Ascending aorta (tissue), 2 donors: ENCODE measurements at regions of chrX and their contacts with region 1.

Region 1: DNA sequence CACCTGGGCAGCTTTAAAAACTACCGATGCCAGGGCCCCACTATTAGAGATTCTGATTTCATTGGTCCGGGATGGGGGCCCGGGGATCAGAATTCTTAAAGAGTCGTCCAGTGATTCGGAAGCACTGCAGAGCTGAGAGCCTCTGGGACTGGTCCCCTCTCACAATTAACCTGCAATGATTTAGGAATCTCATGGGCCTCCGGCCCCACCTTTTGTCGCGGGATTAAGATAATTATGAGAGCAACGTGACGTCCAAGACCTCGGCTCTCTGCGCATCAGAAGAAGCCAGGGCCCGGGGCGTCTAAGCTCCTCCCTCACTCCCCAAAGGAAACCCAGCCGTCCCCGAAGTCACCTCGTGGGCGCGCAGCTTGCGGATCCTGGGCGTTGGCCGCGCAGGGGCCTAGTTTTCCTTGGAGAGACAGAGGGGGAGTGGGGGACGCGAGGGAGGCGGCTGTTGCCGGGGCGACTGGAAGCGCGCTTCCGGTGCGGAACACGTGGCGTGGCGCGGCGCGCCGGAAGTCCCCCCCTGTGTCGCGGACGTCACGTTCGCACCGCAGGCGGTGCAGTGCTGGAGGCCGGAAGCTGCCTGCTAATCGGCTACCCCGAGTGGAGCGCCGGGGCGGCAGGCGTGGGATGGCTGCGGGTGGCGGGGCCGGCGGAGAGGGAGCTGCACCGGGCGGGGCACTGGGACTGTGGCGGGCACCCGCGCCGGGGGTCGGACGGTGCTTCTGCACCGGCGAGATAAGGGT is at the start of gene GEMIN8:
- DNase-seq: peak; percentile 38 to 94
- H3K4me3 ChIP-seq: peak within 1 kb of the TSS; percentile 84 to 88
- H3K27ac ChIP-seq: peak within 1 kb of the TSS; percentile 73 to 88
- H3K4me1 ChIP-seq: peaks cover 0 to 16% of the 10 kb centered on the region in 2 donors
- H3K27me3 ChIP-seq: no peaks in the 10 kb centered on the region
- CTCF ChIP-seq: no peak
- total RNA-seq, gene GEMIN8: 1.5 TPM

Region 2: DNA sequence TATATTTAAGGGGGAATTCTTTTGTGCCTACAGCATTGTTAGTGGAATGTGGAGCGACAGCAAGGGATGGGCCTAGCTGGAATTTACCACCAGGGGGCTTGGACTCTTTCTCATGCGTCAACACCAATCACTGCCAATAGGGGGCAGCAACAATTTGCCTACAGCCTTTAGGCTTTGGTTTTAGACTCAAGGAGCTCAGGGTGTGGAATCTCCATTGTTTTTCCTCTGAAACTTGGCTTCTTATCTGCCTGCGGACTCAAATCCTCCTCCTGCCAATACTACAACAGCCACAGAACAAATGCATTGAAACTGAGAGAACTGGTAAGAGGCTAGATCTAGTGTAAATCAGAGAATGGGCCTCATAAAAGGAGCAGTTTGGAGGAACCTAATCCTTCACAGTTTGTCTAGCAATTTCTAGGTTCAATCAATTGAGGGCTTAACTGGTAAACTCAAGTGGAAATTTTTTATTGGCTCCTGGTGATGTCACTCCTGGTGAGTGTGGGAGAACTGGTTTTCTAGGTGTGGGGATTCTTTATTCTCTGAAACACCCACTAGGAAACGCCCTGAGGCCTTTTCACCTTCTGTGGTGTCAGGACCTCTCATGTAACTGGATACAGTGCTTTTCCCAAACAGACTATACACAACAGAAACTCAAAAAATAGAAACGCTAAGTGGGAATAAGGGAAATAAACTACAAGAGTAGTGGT is 1082.6 kb before region 1 on chrX:
- intact Hi-C with region 1: loop called (anchors 10 kb)
- DNase-seq: peak in 1 of 2 donors; percentile 86
- H3K4me3 ChIP-seq: no peak overlapping the region
- H3K27ac ChIP-seq: peak overlapping the region; percentile 6 to 52
- H3K4me1 ChIP-seq: peaks cover 0 to 6% of the 10 kb centered on the region in 2 donors
- H3K27me3 ChIP-seq: no peaks in the 10 kb centered on the region
- CTCF ChIP-seq: peak; percentile 72 to 89 (median 78)

Region 3: DNA sequence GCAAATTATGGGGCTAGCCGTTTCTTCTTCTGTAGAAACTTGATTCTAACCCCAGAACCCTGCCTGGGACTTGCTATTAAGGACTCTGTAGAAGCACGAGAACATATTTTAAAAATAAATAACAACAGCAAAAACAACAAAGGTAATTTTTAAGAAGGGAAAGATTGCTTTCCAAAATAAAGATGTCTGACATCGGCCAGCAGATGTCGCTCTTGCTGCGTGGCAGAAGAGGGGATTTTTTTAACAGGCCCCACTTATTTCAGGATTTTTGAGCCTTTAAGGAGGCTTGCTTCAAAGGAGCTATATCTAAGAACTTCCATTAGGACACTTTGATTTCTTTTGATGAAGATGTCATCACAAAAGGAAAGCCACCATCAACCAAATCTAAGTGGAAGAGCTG is 523.0 kb before region 1 on chrX:
- intact Hi-C with region 1: loop called (anchors 2 kb)
- DNase-seq: no peak
- H3K4me3 ChIP-seq: no peak overlapping the region
- H3K27ac ChIP-seq: no peak overlapping the region
- H3K4me1 ChIP-seq: no peaks in the 10 kb centered on the region
- H3K27me3 ChIP-seq: no peaks in the 10 kb centered on the region
- CTCF ChIP-seq: peak; percentile 58 to 84 (median 82)

Region 4: DNA sequence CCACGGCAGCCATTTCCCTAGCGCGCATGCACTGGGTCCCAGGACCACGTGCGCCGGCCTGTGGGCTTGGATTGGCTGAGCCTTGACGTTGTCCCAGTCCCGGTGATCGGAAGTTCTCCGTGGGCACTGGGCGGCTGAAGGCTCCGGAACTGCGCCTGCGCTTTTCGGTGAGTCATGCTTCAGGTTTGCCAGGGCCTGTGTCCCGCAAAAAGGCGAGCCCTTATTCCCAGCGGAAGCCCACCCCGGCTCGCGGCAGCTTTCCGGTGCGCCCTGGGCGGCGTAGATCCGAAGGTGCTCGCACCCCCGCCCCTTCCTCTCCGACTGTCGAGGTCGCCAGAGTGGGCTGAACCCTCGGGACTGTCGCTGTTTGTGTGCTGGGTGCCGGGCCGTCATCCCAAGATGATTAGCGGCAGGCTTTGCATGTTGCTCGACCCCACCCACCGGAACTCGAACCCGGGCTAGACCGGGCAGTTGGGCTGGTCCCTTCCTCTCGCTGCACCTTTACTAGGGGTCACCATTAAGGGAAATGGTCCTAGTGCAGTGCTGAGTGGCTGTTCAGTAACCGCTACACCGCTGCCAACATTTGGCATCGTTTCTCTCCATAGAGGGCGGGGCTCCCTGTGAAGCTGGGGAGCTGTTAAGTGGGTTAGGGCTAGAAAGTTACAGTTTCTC is 376.4 kb before region 1 on chrX and contains the start of gene TCEANC:
- intact Hi-C with region 1: loop called (anchors 2 kb)
- DNase-seq: peak; percentile 93 to 99
- H3K4me3 ChIP-seq: peak within 1 kb of the TSS; percentile 69 to 85
- H3K27ac ChIP-seq: peak within 1 kb of the TSS; percentile 96 to 97
- H3K4me1 ChIP-seq: no peaks in the 10 kb centered on the region
- H3K27me3 ChIP-seq: no peaks in the 10 kb centered on the region
- CTCF ChIP-seq: no peak
- total RNA-seq, gene TCEANC: 4.5 TPM

Region 5: GRCh38 chrX:13658602-13659001 is 371.0 kb before region 1 on chrX:
- intact Hi-C with region 1: loop called (anchors 1 kb)
- DNase-seq: no peak
- H3K4me3 ChIP-seq: peak overlapping the region in 1 of 2 donors; percentile 23
- H3K27ac ChIP-seq: peak overlapping the region in 1 of 2 donors; percentile 50
- H3K4me1 ChIP-seq: peaks cover 0 to 3% of the 10 kb centered on the region in 2 donors
- H3K27me3 ChIP-seq: no peaks in the 10 kb centered on the region
- CTCF ChIP-seq: peak; percentile 64 to 84 (median 74)

Region 6: DNA sequence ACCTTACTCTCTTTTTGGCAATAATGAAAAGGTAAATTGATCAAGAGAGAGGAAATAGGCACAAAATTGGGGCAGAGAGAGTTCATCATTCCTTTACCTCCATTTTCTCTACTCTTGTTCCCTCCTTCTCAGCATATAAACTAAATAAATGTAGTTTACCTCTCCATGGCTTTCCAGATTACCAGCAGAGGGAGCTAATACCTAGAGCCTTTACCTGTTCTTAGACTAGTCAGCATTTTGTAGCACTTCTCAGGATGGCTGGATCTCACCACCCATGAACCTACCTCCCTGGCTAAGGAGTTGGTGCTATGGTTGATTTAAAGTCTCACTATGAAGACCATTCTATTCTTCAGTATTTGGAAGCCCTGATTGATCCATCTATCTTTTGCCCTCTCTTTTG is 279.4 kb before region 1 on chrX:
- intact Hi-C with region 1: loop called (anchors 2 kb)
- DNase-seq: no peak
- H3K4me3 ChIP-seq: no peak overlapping the region
- H3K27ac ChIP-seq: no peak overlapping the region
- H3K4me1 ChIP-seq: no peaks in the 10 kb centered on the region
- H3K27me3 ChIP-seq: no peaks in the 10 kb centered on the region
- CTCF ChIP-seq: peak; percentile 46 to 60 (median 47)

Region 7: GRCh38 chrX:13898083-13898482 is 131.5 kb before region 1 on chrX:
- intact Hi-C with region 1: loop called (anchors 1 kb)
- DNase-seq: peak in 1 of 2 donors; percentile 69
- H3K4me3 ChIP-seq: no peak overlapping the region
- H3K27ac ChIP-seq: peak overlapping the region in 1 of 2 donors; percentile 23
- H3K4me1 ChIP-seq: peaks cover 0 to 33% of the 10 kb centered on the region in 2 donors
- H3K27me3 ChIP-seq: no peaks in the 10 kb centered on the region
- CTCF ChIP-seq: peak in 2 of 3 experiments; percentile 29 to 32

Region 8: GRCh38 chrX:15269618-15270521 is 1240.3 kb after region 1 on chrX and contains the start of gene ASB9:
- intact Hi-C with region 1: no loop called
- DNase-seq: no peak
- H3K4me3 ChIP-seq: peak within 1 kb of the TSS in 1 of 2 donors; percentile 38
- H3K27ac ChIP-seq: no peak within 1 kb of the TSS
- H3K4me1 ChIP-seq: no peaks in the 10 kb centered on the region
- H3K27me3 ChIP-seq: no peaks in the 10 kb centered on the region
- CTCF ChIP-seq: no peak
- total RNA-seq, gene ASB9: 3.6 TPM